ENCODE measurements at regions of chr17 and their contacts with region 1.

Region 1: GRCh38 chr17:20992987-20993862 is 49.6 kb downstream of the USP22 start:
- DNase-seq: peak; percentile 69 to 81 (median 76)
- ATAC-seq: peak; percentile 76
- H3K4me3 ChIP-seq: no peak overlapping the region
- H3K27ac ChIP-seq: no peak overlapping the region
- H3K4me1 ChIP-seq: peaks cover 0 to 20% of the 10 kb centered on the region in 2 experiments; a peak in 2 of 5 replicates
- H3K27me3 ChIP-seq: no peaks in the 10 kb centered on the region
- CTCF ChIP-seq: peak; percentile 75 to 81 (median 80)
- EP300 ChIP-seq: no peak
- POLR2A ChIP-seq: no peak
- RAD21 ChIP-seq: peak; percentile 43 to 67; a peak in 3 of 4 replicates

Region 2: DNA sequence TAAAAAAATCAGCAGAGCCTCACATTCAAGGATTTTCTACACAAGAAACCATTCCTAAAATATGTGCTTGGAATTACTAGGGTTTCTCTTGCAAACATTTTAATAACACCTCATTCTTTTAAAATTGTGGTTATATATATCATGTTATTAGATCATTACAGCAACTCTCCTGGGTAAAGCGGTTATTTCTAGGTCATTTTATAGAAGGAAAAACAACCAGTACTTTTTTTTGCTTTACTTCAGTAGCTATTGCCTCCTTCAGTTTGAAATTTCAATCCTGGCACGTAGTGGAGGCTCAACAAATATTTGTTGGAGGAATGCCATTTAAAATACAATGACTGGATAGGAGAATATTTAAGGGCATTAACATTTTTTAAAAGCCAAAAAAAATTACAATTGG is 193.1 kb before region 1 on chr17:
- CTCF ChIA-PET with region 1: no interaction called
- POLR2A ChIA-PET with region 1: no interaction called
- in situ Hi-C with region 1: no loop called
- intact Hi-C with region 1: loop called (anchors 5 kb)
- DNase-seq: no peak
- ATAC-seq: no peak
- H3K4me3 ChIP-seq: no peak overlapping the region
- H3K27ac ChIP-seq: no peak overlapping the region
- H3K4me1 ChIP-seq: no peaks in the 10 kb centered on the region
- H3K27me3 ChIP-seq: no peaks in the 10 kb centered on the region
- CTCF ChIP-seq: no peak
- EP300 ChIP-seq: no peak
- POLR2A ChIP-seq: no peak
- RAD21 ChIP-seq: no peak

Region 3: DNA sequence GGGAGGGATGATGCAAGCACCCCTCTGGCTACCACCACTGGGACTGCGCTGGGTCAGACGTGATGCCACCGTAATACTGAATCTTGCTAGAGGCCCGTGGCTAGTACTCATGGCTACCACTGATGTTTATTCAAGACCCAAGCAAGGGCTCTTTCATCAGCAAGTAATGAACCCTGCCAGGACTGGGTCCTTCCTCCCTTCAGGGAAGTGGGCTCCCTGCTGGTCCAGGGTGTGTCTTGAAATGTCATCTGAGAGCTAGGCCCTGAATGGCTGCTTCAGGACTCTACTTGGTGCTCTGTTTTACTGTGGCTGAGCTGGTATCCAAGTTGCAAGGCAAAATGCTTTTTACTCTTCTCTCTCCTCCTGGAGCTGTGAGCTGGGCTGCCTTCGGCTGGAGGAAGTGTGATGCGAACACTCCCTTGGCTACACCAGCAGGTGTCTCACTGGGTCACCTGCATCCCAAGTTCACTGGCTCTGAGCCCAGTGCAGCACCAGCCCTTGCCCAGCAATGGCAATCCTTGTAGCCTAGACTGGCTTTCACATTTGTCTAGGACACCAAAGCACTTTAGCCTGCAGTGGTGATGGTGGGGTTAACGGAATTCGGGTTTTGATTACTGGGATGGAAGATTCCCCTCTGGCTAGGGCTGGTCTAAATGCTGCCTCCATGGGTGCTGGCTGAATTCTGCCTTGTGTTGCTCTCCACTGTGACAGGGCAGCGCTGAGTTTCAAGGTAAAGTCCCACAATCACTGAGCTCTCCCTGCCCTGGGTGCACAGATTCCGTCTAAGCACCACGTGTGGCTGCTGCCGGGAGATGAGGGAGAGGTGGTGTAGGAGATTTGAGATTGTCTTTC is 49.0 kb before region 1 on chr17:
- CTCF ChIA-PET with region 1: interaction called, 3 read pairs
- POLR2A ChIA-PET with region 1: no interaction called
- in situ Hi-C with region 1: no loop called
- intact Hi-C with region 1: loop called (anchors 2 kb)
- DNase-seq: peak in 1 of 4 experiments; percentile 6
- ATAC-seq: peak; percentile 78
- H3K4me3 ChIP-seq: no peak overlapping the region
- H3K27ac ChIP-seq: no peak overlapping the region
- H3K4me1 ChIP-seq: no peaks in the 10 kb centered on the region
- H3K27me3 ChIP-seq: peaks cover 0 to 4% of the 10 kb centered on the region in 2 experiments; a peak in 1 of 5 replicates
- CTCF ChIP-seq: peak; percentile 6 to 42 (median 36); a peak in 3 of 6 replicates
- EP300 ChIP-seq: no peak
- POLR2A ChIP-seq: no peak
- RAD21 ChIP-seq: peak in 1 of 2 experiments; percentile 37; a peak in 2 of 4 replicates